Esophagus squamous epithelium (tissue), 5 donors: ENCODE measurements at regions of chr10 and their contacts with region 1.

Region 1: DNA sequence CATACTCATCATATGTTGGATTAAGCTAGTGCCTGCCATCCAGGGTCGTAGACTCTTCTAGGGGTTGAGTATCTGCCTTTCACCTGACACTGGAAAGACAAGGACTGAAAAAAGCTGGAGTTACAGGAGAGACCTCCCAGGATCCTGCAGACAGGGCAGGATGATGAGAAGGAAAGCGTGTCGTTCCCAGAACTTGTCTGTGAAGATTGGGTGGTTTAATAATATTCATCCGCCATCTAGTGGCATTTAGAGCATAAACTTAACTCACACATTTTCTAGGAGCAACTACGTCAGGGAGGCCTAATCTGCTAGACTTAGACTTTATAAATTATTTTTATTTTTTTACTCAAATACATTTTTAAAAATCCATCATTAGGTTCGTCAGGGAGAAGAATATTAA is 59.6 kb downstream of the ADRB1 start:
- DNase-seq: no peak
- H3K4me3 ChIP-seq: no peak overlapping the region
- H3K27ac ChIP-seq: no peak overlapping the region
- H3K4me1 ChIP-seq: peaks cover 9 to 23% (median 11%) of the 10 kb centered on the region in 3 donors
- H3K27me3 ChIP-seq: peaks cover 0 to 24% (median 0%) of the 10 kb centered on the region in 4 donors
- CTCF ChIP-seq: peak; percentile 44 to 74 (median 60)
- POLR2A ChIP-seq: no peak

Region 2: DNA sequence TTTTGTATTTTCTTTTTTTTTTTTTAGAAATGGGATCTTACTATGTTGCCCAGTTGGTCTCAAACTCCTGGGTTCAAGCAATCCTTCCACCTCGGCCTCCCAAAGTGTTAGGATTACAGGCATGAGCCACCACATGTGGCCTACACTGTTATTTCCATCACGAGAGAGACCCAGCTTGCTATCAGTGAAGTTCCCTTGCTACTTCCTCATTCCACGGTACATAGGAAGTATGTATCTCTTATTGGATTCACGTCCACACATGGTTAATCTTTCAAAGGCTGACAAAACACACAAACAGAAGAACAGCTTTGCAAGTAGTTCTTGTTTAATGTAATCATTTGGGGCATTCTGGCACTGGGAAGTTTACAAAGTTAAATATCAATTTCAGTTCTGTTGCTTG is 300.3 kb before region 1 on chr10:
- intact Hi-C with region 1: loop called (anchors 5 kb)
- DNase-seq: no peak
- H3K4me3 ChIP-seq: no peak overlapping the region
- H3K27ac ChIP-seq: peak overlapping the region in 2 of 4 donors; percentile 32 to 52
- H3K4me1 ChIP-seq: peaks cover 0 to 31% (median 4%) of the 10 kb centered on the region in 3 donors
- H3K27me3 ChIP-seq: no peaks in the 10 kb centered on the region
- CTCF ChIP-seq: no peak
- POLR2A ChIP-seq: no peak

Region 3: DNA sequence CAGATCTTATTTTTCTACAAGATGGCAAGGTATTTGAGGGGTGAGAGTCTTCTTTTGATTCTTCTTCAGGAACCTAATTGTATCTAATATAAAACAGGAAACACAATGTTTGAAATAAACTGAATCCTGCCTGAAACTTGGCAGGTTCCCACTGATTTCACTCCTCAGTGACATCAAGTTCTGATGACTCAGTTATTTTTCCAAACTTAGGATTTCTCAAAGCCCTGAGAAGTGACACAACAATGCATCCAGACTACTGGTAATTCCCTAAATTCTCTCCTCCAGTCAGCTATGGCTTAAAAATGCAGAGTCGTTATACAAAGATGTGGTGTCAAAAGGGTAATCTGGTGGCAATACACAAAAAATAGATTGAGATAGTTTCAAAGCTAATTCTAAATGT is 473.8 kb after region 1 on chr10:
- intact Hi-C with region 1: no loop called
- DNase-seq: no peak
- H3K4me3 ChIP-seq: no peak overlapping the region
- H3K27ac ChIP-seq: peak overlapping the region; percentile 69 to 90 (median 78)
- H3K4me1 ChIP-seq: peaks cover 14 to 52% (median 30%) of the 10 kb centered on the region in 3 donors
- H3K27me3 ChIP-seq: no peaks in the 10 kb centered on the region
- CTCF ChIP-seq: no peak
- POLR2A ChIP-seq: no peak